Cardiac septum (tissue), 1 donor: ENCODE measurements at regions of chr19 and their contacts with region 1.

Region 1: GRCh38 chr19:55301459-55302317 is 17.9 kb downstream of the BRSK1 start:
- DNase-seq: peak; percentile 94

Region 2: DNA sequence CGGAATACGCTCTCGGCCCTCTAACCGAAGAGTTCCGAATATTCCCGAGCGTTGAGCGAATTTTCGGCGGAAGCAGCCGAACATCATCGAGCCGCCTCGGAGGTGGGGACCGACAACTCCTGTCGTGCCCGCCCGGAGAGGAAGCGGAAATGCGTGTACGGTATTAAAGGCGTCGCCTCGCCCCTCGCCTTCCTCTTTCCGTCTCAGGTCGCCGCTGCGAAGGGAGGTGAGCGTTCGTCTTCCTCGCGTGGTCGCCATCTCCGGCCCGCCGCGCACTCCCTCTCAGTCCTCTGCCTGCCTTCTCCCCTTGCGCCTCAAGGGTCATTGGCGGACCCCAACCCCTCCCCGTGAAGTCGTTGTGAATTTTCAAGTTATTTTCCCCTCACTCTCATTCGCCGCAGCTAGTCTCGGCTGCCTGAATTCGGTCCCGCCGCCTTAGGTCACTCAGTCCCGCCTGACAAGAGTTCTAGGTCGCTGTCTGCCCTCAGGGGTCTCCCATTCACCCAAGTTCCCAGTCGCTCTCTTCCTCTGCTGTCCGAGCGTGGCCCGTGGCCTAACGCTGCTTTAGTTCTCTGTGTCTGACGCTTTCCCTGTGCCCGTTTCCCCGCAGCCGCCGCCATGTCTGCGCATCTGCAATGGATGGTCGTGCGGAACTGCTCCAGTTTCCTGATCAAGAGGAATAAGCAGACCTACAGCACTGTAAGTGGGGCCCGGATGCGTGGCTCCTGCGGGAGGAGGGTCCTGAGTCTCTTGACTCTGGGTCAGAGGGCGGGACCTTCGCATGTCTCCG is 84.2 kb after region 1 on chr19 and contains the start of gene RPL28:
- intact Hi-C with region 1: loop called (anchors 2 kb)
- DNase-seq: peak; percentile 99
- total RNA-seq, gene RPL28: 479 TPM

Region 3: DNA sequence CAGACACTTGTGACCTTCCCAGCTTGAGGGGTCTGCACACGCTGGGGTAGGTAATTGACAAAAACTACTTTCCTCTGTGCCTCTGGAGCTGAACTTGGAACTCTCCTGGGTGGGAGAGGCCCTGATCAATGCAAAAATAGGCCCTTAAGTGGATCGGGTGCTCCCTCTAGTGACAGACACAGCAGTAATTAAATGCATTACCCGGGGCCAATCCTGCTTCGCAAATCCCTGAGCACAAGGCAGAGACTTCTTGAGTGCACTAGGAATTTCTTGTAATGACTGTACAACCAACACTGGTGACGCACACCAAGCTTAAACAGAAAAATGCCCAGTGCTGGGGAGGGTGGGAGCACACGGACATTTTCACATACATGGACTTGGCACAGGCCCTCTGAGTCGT is 116.5 kb after region 1 on chr19:
- intact Hi-C with region 1: loop called (anchors 10 kb)
- DNase-seq: no peak